Common myeloid progenitor, CD34-positive (primary cell): ENCODE measurements at regions of chr7 and their contacts with region 1.

Region 1: GRCh38 chr7:25894902-25895791 is 256.9 kb upstream of the NFE2L3 start:
- DNase-seq: peak; percentile 87 to 91 (median 89)
- H3K4me3 ChIP-seq: peak overlapping the region in 4 of 7 experiments; percentile 1 to 60 (median 36)
- H3K27ac ChIP-seq: no peak overlapping the region
- H3K4me1 ChIP-seq: peaks cover 8 to 41% (median 30%) of the 10 kb centered on the region in 4 experiments
- H3K27me3 ChIP-seq: peaks cover 0 to 36% (median 12%) of the 10 kb centered on the region in 5 experiments

Region 2: DNA sequence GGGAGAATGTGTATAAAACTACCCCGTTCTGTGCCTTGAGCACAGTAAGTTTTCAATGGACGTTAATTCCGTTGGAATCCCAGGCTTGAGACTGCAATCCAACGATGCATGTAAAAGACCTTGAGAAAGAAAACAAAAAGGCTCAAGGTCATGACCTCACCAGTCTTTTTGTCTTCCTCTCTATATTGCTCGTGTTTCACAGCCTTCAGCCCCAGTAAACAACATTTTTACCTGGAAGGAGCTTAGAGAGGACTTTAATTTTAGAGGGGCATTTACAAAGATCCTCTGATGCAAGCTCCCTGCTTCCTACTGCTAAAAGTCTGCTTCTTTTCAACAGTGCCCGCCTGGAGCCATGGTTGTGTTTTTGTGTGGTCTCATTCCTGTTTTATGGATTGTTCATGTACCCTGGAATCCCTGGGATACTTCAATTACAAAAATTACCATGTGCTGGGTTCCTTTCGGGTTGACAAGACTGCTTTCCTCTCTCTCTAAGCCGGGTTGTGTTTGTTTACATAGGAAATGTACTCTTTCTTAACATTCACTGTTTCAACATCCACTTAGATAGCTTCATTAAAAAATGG is 63.2 kb before region 1 on chr7:
- CTCF ChIA-PET with region 1: no interaction called
- POLR2A ChIA-PET with region 1: no interaction called
- DNase-seq: no peak
- H3K4me3 ChIP-seq: no peak overlapping the region
- H3K27ac ChIP-seq: no peak overlapping the region
- H3K4me1 ChIP-seq: no peaks in the 10 kb centered on the region
- H3K27me3 ChIP-seq: no peaks in the 10 kb centered on the region

Region 3: GRCh38 chr7:25877802-25878789 is 17.1 kb before region 1 on chr7:
- CTCF ChIA-PET with region 1: interaction called, 43 read pairs
- POLR2A ChIA-PET with region 1: interaction called, 3 read pairs
- DNase-seq: peak in 1 of 3 donors; percentile 10
- H3K4me3 ChIP-seq: no peak overlapping the region
- H3K27ac ChIP-seq: no peak overlapping the region
- H3K4me1 ChIP-seq: no peaks in the 10 kb centered on the region
- H3K27me3 ChIP-seq: peaks cover 0 to 66% (median 20%) of the 10 kb centered on the region in 5 experiments

Region 4: GRCh38 chr7:25928549-25929330 is 33.6 kb after region 1 on chr7:
- CTCF ChIA-PET with region 1: no interaction called
- POLR2A ChIA-PET with region 1: no interaction called
- DNase-seq: no peak
- H3K4me3 ChIP-seq: no peak overlapping the region
- H3K27ac ChIP-seq: no peak overlapping the region
- H3K4me1 ChIP-seq: no peaks in the 10 kb centered on the region
- H3K27me3 ChIP-seq: peaks cover 0 to 5% (median 2%) of the 10 kb centered on the region in 5 experiments

Region 5: DNA sequence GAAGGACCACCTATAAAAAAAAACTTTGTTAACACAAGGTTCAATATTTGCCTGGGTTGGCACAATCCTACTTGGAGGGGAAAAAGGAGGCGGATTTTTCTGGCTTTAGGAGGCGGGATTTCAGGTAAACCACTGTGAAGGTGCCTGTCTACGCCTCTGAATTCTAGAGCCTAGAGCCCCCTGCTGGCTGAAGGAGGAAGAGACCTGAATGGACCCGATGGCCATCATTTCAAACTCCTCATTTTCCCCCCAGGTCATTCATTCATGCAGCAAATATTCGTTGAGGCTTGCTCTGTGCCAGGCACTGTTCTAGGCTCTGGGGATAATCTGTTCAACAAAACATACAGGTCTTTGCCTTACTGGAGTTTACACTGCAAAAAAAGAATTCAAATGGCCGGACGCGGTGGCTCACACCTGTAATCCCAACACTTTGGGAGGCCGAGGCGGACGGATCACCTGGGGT is 166.6 kb after region 1 on chr7:
- CTCF ChIA-PET with region 1: interaction called, 10 read pairs
- POLR2A ChIA-PET with region 1: no interaction called
- DNase-seq: peak; percentile 57 to 72 (median 70)
- H3K4me3 ChIP-seq: no peak overlapping the region
- H3K27ac ChIP-seq: no peak overlapping the region
- H3K4me1 ChIP-seq: peaks cover 0 to 10% (median 1%) of the 10 kb centered on the region in 4 experiments
- H3K27me3 ChIP-seq: peaks cover 0 to 10% (median 0%) of the 10 kb centered on the region in 5 experiments

Region 6: DNA sequence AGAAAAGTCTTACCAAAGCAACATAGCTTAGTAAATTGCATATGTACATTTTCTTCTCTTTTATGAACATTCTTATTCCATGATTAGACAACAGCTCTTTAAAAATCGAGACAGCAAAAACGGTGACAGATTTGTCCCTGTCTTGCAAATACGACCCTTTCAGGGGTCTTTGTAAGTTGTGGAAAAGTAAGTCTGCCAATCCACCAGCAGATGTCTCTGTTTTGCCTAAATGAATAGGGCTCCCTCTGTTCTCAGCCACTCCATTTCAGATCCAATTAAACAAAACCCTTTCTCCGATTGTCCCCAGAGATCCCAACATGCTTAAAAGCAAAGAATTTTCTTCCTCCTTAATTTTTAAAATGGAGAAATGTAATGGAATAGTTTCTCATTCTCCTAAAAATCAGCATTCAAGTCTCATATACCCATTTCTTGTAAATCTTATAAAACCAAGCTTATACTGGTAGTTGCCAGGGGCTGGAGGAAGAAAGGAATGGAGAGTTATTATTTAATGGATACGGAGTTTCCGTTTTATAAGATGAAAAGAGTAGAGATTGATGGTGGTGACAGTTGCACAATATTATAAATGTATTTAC is 195.9 kb after region 1 on chr7:
- CTCF ChIA-PET with region 1: interaction called, 33 read pairs
- POLR2A ChIA-PET with region 1: no interaction called
- DNase-seq: peak; percentile 75 to 78 (median 77)
- H3K4me3 ChIP-seq: peak overlapping the region in 5 of 7 experiments; percentile 11 to 69 (median 33)
- H3K27ac ChIP-seq: peak overlapping the region in 1 of 2 experiments; percentile 44
- H3K4me1 ChIP-seq: peaks cover 0 to 16% (median 6%) of the 10 kb centered on the region in 4 experiments
- H3K27me3 ChIP-seq: no peaks in the 10 kb centered on the region

Region 7: DNA sequence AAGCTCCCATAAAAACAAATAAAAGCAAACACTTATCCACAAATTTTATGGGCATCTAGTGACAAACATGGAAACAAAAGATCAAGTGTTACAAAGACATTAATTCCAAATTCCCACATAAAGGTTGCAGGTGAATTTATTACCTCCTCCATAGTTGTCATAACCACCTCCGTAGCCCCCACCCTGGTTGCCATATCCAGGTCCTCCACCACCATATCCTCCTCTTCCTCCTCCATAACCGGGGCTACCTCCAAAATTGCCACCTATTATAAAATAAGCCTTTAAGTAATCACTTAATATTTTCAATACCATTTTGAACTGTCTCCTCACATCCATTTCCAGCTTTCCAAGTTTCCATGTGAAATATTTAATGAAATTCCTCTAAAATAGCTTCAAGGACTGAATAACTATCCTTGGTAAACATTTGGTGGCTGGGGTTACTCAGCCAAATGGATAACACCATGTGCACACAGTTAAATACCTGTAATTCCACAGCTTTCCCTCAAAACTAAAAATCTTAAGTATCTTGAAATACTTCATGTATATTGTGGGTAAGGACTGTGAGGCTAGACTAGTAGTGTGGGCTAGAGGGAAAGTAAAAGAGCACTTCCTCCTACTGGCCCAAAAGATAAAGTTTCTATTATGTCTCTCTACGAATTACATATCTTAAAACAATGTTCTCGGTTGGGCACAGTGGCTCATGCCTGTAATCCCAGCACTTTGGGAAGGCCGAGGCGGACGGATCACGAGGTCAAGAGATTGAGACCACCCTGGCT is 298.5 kb after region 1 on chr7:
- CTCF ChIA-PET with region 1: interaction called, 36 read pairs
- POLR2A ChIA-PET with region 1: interaction called, 3 read pairs
- DNase-seq: peak in 2 of 3 donors; percentile 49 to 54
- H3K4me3 ChIP-seq: no peak overlapping the region
- H3K27ac ChIP-seq: no peak overlapping the region
- H3K4me1 ChIP-seq: peaks cover 36 to 58% (median 45%) of the 10 kb centered on the region in 4 experiments
- H3K27me3 ChIP-seq: no peaks in the 10 kb centered on the region

Region 8: GRCh38 chr7:26356929-26357798 is 462.0 kb after region 1 on chr7:
- CTCF ChIA-PET with region 1: interaction called, 112 read pairs
- POLR2A ChIA-PET with region 1: no interaction called
- DNase-seq: no peak
- H3K4me3 ChIP-seq: no peak overlapping the region
- H3K27ac ChIP-seq: no peak overlapping the region
- H3K4me1 ChIP-seq: peaks cover 2 to 14% (median 9%) of the 10 kb centered on the region in 4 experiments
- H3K27me3 ChIP-seq: no peaks in the 10 kb centered on the region

Region 9: DNA sequence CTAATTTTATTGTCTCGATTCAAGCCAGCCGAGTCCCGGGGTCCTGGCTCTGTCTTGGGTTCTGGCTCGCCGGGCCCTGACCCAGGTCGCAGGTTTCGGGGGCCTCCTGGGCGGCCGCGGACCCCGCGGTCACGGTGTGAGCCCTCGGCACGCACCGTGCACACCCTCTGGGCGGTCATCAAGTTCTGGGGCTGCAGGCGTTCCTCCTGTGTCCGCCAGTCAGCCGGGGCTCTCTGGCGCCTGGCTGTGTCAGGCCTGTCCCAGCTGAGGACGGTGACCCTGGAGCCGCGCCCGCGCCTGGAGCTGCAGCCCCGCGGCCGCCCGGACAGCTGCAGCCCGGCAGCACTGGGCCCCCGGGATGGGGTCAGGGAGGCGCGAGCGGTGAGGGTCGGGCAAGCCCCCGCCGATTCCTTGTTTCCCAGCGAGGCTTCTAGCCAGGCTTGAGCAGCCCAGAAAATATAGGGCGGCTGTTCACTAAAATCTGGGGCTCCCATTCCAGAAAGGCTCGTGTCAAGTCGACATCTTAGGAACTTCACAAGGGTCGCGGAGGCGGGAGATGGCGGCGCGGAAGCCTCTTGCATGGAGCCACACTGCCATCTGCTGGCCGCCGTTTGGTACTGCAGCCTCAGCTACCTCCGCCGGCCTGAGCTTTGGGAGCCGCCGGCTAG is 1265.5 kb after region 1 on chr7:
- CTCF ChIA-PET with region 1: interaction called, 10 read pairs
- POLR2A ChIA-PET with region 1: no interaction called
- DNase-seq: peak; percentile 92 to 96 (median 95)
- H3K4me3 ChIP-seq: peak overlapping the region; percentile 56 to 100 (median 88)
- H3K27ac ChIP-seq: peak overlapping the region; percentile 86 to 96
- H3K4me1 ChIP-seq: peaks cover 14 to 68% (median 64%) of the 10 kb centered on the region in 4 experiments
- H3K27me3 ChIP-seq: no peaks in the 10 kb centered on the region